ENCODE measurements at regions of chr15 and their contacts with region 1.

Region 1: GRCh38 chr15:66497502-66498455 is at the start of gene SNAPC5:
- DNase-seq: peak; percentile 97
- ATAC-seq: peak; percentile 93
- H3K4me3 ChIP-seq: peak within 1 kb of the TSS; percentile 88 to 94 (median 89)
- H3K4me3 Mint-ChIP-seq: peak within 1 kb of the TSS; percentile 94
- H3K27ac ChIP-seq: peak within 1 kb of the TSS; percentile 95 to 96
- H3K27ac Mint-ChIP-seq: peak within 1 kb of the TSS; percentile 93
- H3K4me1 ChIP-seq: peaks cover 17 to 27% of the 10 kb centered on the region in 2 donors
- H3K4me1 Mint-ChIP-seq: peaks cover 33% of the 10 kb centered on the region
- H3K27me3 ChIP-seq: no peaks in the 10 kb centered on the region
- H3K27me3 Mint-ChIP-seq: no peaks in the 10 kb centered on the region
- CTCF ChIP-seq: peak; percentile 99
- total RNA-seq, gene SNAPC5: 28.5 and 29.9 TPM in 2 replicates

Region 2: GRCh38 chr15:65530314-65531122 is 967.3 kb before region 1 on chr15 and contains the start of gene HACD3:
- CTCF ChIA-PET with region 1: interaction called, 3 read pairs
- POLR2A ChIA-PET with region 1: no interaction called
- intact Hi-C with region 1: loop called (anchors 10 kb)
- DNase-seq: peak; percentile 91
- ATAC-seq: peak; percentile 97
- H3K4me3 ChIP-seq: peak within 1 kb of the TSS; percentile 63 to 91 (median 82)
- H3K4me3 Mint-ChIP-seq: peak within 1 kb of the TSS; percentile 96
- H3K27ac ChIP-seq: peak within 1 kb of the TSS; percentile 44 to 59
- H3K27ac Mint-ChIP-seq: peak within 1 kb of the TSS; percentile 87
- H3K4me1 ChIP-seq: peaks cover 3 to 7% of the 10 kb centered on the region in 2 donors
- H3K4me1 Mint-ChIP-seq: peaks cover 21% of the 10 kb centered on the region
- H3K27me3 ChIP-seq: no peaks in the 10 kb centered on the region
- H3K27me3 Mint-ChIP-seq: no peaks in the 10 kb centered on the region
- CTCF ChIP-seq: no peak
- total RNA-seq, gene HACD3: 18.8 and 19.3 TPM in 2 replicates

Region 3: GRCh38 chr15:66251790-66252684 is 245.7 kb before region 1 on chr15:
- CTCF ChIA-PET with region 1: no interaction called
- POLR2A ChIA-PET with region 1: no interaction called
- intact Hi-C with region 1: loop called (anchors 2 kb)
- DNase-seq: peak; percentile 63
- ATAC-seq: peak; percentile 67
- H3K4me3 ChIP-seq: peak overlapping the region; percentile 38 to 88 (median 57)
- H3K4me3 Mint-ChIP-seq: peak overlapping the region; percentile 81
- H3K27ac ChIP-seq: no peak overlapping the region
- H3K27ac Mint-ChIP-seq: no peak overlapping the region
- H3K4me1 ChIP-seq: peaks cover 32 to 33% of the 10 kb centered on the region in 2 donors
- H3K4me1 Mint-ChIP-seq: peaks cover 27% of the 10 kb centered on the region
- H3K27me3 ChIP-seq: peaks cover 0 to 66% (median 33%) of the 10 kb centered on the region in 4 experiments
- H3K27me3 Mint-ChIP-seq: peaks cover 60% of the 10 kb centered on the region
- CTCF ChIP-seq: peak; percentile 52

Region 4: GRCh38 chr15:66293419-66294156 is 204.2 kb before region 1 on chr15 and contains the start of gene DIS3L:
- CTCF ChIA-PET with region 1: interaction called, 15 read pairs
- POLR2A ChIA-PET with region 1: interaction called, 5 read pairs
- intact Hi-C with region 1: loop called (anchors 2 kb)
- DNase-seq: peak; percentile 84
- ATAC-seq: peak; percentile 80
- H3K4me3 ChIP-seq: peak within 1 kb of the TSS; percentile 50 to 90 (median 61)
- H3K4me3 Mint-ChIP-seq: peak within 1 kb of the TSS; percentile 89
- H3K27ac ChIP-seq: peak within 1 kb of the TSS; percentile 92 to 93
- H3K27ac Mint-ChIP-seq: peak within 1 kb of the TSS; percentile 93
- H3K4me1 ChIP-seq: peaks cover 20 to 26% of the 10 kb centered on the region in 2 donors
- H3K4me1 Mint-ChIP-seq: peaks cover 31% of the 10 kb centered on the region
- H3K27me3 ChIP-seq: no peaks in the 10 kb centered on the region
- H3K27me3 Mint-ChIP-seq: no peaks in the 10 kb centered on the region
- CTCF ChIP-seq: no peak
- total RNA-seq, gene DIS3L: 39.4 and 43.9 TPM in 2 replicates

Region 5: DNA sequence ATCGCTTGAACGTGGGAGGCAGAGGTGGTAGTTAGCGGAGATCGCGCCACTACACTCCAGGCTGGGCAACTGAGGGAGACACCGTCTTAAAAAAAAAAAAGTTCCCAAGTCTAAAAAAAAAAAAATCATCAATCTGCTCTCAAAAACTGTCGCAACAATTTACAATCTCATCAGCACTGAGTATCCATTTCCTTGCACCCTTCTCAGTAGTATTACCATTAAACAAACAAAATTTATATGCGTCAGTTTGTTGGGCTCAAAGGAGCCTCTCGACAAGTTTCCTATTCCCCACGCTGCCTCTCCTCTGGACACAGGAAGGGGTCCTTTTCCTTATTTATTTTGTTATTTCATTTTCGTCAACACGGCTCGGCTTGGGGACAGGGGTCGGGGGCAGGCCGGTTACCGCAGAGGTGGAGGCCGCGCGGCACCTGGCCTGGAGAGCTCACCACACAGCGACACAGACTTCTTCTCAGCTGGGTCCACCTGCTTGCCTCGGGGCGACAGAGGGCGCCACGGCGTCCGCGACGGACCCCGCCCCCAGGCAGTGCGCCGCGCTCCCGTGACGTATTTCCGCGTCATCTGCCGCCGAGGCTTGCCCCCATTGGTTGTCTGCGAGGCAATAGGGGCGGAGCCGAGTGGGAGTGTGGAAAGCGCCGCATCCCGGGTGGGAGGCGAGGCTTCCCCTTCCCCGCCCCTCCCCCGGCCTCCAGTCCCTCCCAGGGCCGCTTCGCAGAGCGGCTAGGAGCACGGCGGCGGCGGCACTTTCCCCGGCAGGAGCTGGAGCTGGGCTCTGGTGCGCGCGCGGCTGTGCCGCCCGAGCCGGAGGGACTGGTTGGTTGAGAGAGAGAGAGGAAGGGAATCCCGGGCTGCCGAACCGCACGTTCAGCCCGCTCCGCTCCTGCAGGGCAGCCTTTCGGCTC is 111.3 kb before region 1 on chr15 and contains the start of gene MAP2K1:
- CTCF ChIA-PET with region 1: interaction called, 89 read pairs
- POLR2A ChIA-PET with region 1: interaction called, 9 read pairs
- intact Hi-C with region 1: loop called (anchors 1 kb)
- DNase-seq: peak; percentile 98
- ATAC-seq: peak; percentile 91
- H3K4me3 ChIP-seq: peak within 1 kb of the TSS; percentile 59 to 78 (median 75)
- H3K4me3 Mint-ChIP-seq: peak within 1 kb of the TSS; percentile 92
- H3K27ac ChIP-seq: peak within 1 kb of the TSS; percentile 61 to 78
- H3K27ac Mint-ChIP-seq: peak within 1 kb of the TSS; percentile 94
- H3K4me1 ChIP-seq: peaks cover 47 to 50% of the 10 kb centered on the region in 2 donors
- H3K4me1 Mint-ChIP-seq: peaks cover 46% of the 10 kb centered on the region
- H3K27me3 ChIP-seq: no peaks in the 10 kb centered on the region
- H3K27me3 Mint-ChIP-seq: no peaks in the 10 kb centered on the region
- CTCF ChIP-seq: peak; percentile 80
- total RNA-seq, gene MAP2K1: 50.3 and 52.3 TPM in 2 replicates

Region 6: GRCh38 chr15:67165254-67166253 is 667.8 kb after region 1 on chr15:
- CTCF ChIA-PET with region 1: no interaction called
- POLR2A ChIA-PET with region 1: no interaction called
- intact Hi-C with region 1: no loop called
- DNase-seq: no peak
- ATAC-seq: no peak
- H3K4me3 ChIP-seq: no peak overlapping the region
- H3K4me3 Mint-ChIP-seq: no peak overlapping the region
- H3K27ac ChIP-seq: no peak overlapping the region
- H3K27ac Mint-ChIP-seq: no peak overlapping the region
- H3K4me1 ChIP-seq: peaks cover 13 to 19% of the 10 kb centered on the region in 2 donors
- H3K4me1 Mint-ChIP-seq: peaks cover 34% of the 10 kb centered on the region
- H3K27me3 ChIP-seq: no peaks in the 10 kb centered on the region
- H3K27me3 Mint-ChIP-seq: no peaks in the 10 kb centered on the region
- CTCF ChIP-seq: no peak

Measured in B cell (primary cell).